CD8-positive, alpha-beta T cell (primary cell): ENCODE measurements at regions of chr13 and their contacts with region 1.

Region 1: DNA sequence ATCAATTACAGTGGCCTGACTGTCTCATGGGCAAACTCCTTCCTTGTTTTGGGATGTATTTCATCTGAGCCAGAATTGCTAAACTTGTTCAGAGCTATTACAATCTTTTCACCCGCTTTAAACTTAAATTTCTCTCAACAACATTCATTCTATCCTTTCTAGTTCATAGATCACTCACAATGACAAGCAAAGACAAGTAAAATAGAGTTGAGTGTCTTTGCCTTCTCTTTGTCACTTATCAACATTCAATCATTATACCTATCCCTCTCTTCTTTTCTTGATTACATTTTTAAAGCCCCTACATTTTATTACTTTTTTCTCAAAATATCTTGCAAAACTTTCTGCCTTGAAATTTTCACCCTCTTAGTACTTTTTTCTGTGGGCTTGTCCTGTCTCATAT is 1113.1 kb downstream of the PCDH17 start:
- DNase-seq: no peak
- ATAC-seq: no peak
- H3K4me3 ChIP-seq: no peak overlapping the region
- H3K4me3 Mint-ChIP-seq: no peak overlapping the region
- H3K27ac ChIP-seq: no peak overlapping the region
- H3K27ac Mint-ChIP-seq: no peak overlapping the region
- H3K4me1 ChIP-seq: no peaks in the 10 kb centered on the region
- H3K4me1 Mint-ChIP-seq: no peaks in the 10 kb centered on the region
- H3K27me3 ChIP-seq: no peaks in the 10 kb centered on the region
- H3K27me3 Mint-ChIP-seq: no peaks in the 10 kb centered on the region
- CTCF ChIP-seq: no peak

Region 2: DNA sequence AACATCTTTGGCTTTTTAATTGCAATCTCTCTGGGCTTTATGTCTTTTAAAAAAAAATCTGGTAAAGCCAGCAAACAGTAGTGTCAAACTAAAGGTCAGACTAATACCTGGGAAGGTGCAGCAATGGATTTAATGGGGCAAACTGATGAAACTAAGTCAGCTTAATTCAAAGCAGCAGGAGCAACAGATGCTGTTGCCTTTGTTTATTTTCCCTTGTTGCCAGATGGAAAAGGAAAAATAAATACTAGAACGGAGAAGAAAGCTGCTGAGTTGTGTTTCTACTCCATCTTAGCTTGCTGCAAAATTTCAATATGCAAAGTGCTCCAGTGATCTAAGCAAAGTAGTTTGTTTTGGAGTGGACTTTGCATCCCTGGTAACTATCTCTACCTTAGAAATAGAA is 15.3 kb before region 1 on chr13:
- CTCF ChIA-PET with region 1: no interaction called
- POLR2A ChIA-PET with region 1: no interaction called
- intact Hi-C with region 1: loop called in 1 of 2 experiments (anchors 2 kb)
- DNase-seq: no peak
- ATAC-seq: no peak
- H3K4me3 ChIP-seq: no peak overlapping the region
- H3K4me3 Mint-ChIP-seq: no peak overlapping the region
- H3K27ac ChIP-seq: no peak overlapping the region
- H3K27ac Mint-ChIP-seq: no peak overlapping the region
- H3K4me1 ChIP-seq: no peaks in the 10 kb centered on the region
- H3K4me1 Mint-ChIP-seq: no peaks in the 10 kb centered on the region
- H3K27me3 ChIP-seq: no peaks in the 10 kb centered on the region
- H3K27me3 Mint-ChIP-seq: no peaks in the 10 kb centered on the region
- CTCF ChIP-seq: no peak

Region 3: GRCh38 chr13:58767566-58767965 is 22.9 kb after region 1 on chr13:
- CTCF ChIA-PET with region 1: no interaction called
- POLR2A ChIA-PET with region 1: no interaction called
- intact Hi-C with region 1: no loop called
- DNase-seq: no peak
- ATAC-seq: no peak
- H3K4me3 ChIP-seq: no peak overlapping the region
- H3K4me3 Mint-ChIP-seq: no peak overlapping the region
- H3K27ac ChIP-seq: no peak overlapping the region
- H3K27ac Mint-ChIP-seq: no peak overlapping the region
- H3K4me1 ChIP-seq: no peaks in the 10 kb centered on the region
- H3K4me1 Mint-ChIP-seq: no peaks in the 10 kb centered on the region
- H3K27me3 ChIP-seq: no peaks in the 10 kb centered on the region
- H3K27me3 Mint-ChIP-seq: no peaks in the 10 kb centered on the region
- CTCF ChIP-seq: no peak